Heart left ventricle (tissue), 16 donors: ENCODE measurements at regions of chr1 and their contacts with region 1.

Region 1: GRCh38 chr1:168342572-168343280 is 62.0 kb downstream of the TBX19 start:
- DNase-seq: peak; percentile 89 to 92 (median 90)
- ATAC-seq: peak; percentile 96 to 98 (median 98)
- H3K4me3 ChIP-seq: peak overlapping the region in 9 of 12 donors; percentile 2 to 46 (median 20)
- H3K27ac ChIP-seq: peak overlapping the region in 5 of 12 donors; percentile 2 to 76 (median 39)
- H3K4me1 ChIP-seq: peaks cover 0 to 27% (median 5%) of the 10 kb centered on the region in 12 donors
- H3K27me3 ChIP-seq: no peaks in the 10 kb centered on the region
- CTCF ChIP-seq: peak; percentile 77 to 88 (median 84)
- POLR2A ChIP-seq: no peak

Region 2: DNA sequence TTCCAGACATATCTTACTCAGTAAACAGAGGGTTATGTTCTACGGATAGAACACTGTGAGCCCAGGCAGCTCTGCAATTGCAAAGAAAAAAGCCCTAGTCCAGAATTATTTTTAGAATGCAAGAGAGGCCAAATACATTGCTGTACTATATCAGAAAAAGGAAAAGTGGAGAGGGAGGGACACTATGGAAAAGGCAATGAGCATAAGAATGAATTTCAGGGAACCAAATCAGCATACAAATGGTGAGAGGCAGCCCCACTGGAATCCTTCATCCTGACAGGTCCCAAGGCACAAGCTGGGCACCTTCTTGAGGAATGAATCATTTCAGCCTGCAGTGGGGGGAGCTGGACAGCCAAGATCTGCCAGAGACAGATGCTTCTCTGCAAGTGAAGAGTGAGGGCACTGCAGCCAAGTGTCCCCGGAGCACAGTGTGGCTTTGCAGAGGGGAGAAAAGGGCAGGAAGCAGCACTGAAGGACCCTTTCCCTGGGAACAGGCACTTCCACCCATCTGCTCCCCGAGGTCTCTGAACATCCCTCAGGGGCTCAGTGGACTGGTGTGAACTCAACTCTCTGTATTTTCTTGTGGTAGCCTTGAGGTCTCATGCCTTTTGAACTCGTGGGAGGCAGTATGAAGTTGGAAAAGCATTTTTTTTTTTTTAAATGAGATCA is 85.5 kb after region 1 on chr1:
- intact Hi-C with region 1: loop called in 4 of 10 experiments (anchors 5 to 10 kb)
- DNase-seq: peak in 4 of 5 donors; percentile 28 to 66 (median 46)
- ATAC-seq: peak; percentile 67 to 81 (median 74)
- H3K4me3 ChIP-seq: no peak overlapping the region
- H3K27ac ChIP-seq: peak overlapping the region; percentile 26 to 77 (median 54)
- H3K4me1 ChIP-seq: peaks cover 5 to 47% (median 26%) of the 10 kb centered on the region in 12 donors
- H3K27me3 ChIP-seq: no peaks in the 10 kb centered on the region
- CTCF ChIP-seq: no peak
- POLR2A ChIP-seq: no peak

Region 3: GRCh38 chr1:168439456-168440375 is 97.0 kb after region 1 on chr1:
- intact Hi-C with region 1: loop called in 3 of 10 experiments (anchors 5 to 10 kb)
- DNase-seq: peak; percentile 68 to 82 (median 73)
- ATAC-seq: peak; percentile 91 to 96 (median 92)
- H3K4me3 ChIP-seq: peak overlapping the region in 9 of 12 donors; percentile 12 to 47 (median 30)
- H3K27ac ChIP-seq: no peak overlapping the region
- H3K4me1 ChIP-seq: peaks cover 0 to 12% (median 2%) of the 10 kb centered on the region in 12 donors
- H3K27me3 ChIP-seq: no peaks in the 10 kb centered on the region
- CTCF ChIP-seq: peak; percentile 48 to 81 (median 70)
- POLR2A ChIP-seq: no peak

Region 4: DNA sequence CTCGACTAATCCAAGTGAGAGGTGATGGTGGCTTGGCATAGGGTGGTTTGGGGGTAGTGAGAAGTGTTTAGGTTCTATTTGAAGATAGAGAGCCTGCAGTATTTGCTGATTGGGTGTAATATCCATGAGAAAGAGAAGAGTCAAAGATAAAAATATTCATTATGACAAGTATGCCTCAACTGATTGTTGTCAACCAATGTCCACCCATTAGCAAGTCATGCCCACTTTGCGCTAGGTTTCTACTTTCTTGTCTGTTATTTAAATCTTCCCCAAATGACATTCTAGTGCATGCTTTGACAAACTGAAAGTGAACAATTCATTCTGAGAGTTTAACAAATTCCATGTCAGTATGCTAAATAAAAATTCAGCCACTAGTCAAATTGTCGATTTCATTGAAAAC is 229.9 kb after region 1 on chr1:
- intact Hi-C with region 1: loop called in 9 of 10 experiments (anchors 2 to 10 kb)
- DNase-seq: no peak
- ATAC-seq: no peak
- H3K4me3 ChIP-seq: no peak overlapping the region
- H3K27ac ChIP-seq: no peak overlapping the region
- H3K4me1 ChIP-seq: no peaks in the 10 kb centered on the region
- H3K27me3 ChIP-seq: no peaks in the 10 kb centered on the region
- CTCF ChIP-seq: no peak
- POLR2A ChIP-seq: no peak

Region 5: DNA sequence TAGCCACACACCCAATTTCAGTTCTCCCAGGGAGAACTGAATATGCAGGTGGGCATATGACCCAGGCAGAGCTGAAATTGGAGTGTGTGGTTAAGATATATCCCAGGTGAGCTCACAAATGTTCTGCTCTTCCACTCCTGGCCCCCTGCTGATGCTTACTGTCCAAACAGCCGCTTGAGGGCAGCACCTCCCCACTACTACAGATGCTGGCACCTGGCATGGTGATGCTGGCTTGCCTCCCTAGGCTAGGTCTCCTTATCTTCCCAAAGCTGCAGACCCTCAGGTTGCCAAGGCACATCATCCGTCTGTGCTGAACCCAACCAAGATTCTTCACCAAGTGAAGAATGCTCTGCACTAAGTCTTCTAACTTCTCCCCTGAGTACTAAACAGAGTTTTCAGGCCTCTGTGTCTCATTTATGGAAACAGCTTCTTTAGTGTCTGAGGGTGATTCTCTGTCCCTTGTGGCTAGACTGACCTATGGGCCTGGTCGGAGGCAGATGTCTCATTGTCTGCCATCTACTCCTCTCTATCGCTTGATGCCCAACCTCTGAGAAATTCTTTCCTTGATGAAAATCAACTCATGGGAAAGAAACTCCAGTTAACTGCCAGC is 260.9 kb after region 1 on chr1:
- intact Hi-C with region 1: loop called in 1 of 10 experiments (anchors 10 kb)
- DNase-seq: peak; percentile 69 to 86 (median 79)
- ATAC-seq: peak; percentile 63 to 91 (median 90)
- H3K4me3 ChIP-seq: no peak overlapping the region
- H3K27ac ChIP-seq: no peak overlapping the region
- H3K4me1 ChIP-seq: peaks cover 0 to 17% (median under 1%) of the 10 kb centered on the region in 12 donors
- H3K27me3 ChIP-seq: no peaks in the 10 kb centered on the region
- CTCF ChIP-seq: peak; percentile 68 to 90 (median 82)
- POLR2A ChIP-seq: no peak

Region 6: DNA sequence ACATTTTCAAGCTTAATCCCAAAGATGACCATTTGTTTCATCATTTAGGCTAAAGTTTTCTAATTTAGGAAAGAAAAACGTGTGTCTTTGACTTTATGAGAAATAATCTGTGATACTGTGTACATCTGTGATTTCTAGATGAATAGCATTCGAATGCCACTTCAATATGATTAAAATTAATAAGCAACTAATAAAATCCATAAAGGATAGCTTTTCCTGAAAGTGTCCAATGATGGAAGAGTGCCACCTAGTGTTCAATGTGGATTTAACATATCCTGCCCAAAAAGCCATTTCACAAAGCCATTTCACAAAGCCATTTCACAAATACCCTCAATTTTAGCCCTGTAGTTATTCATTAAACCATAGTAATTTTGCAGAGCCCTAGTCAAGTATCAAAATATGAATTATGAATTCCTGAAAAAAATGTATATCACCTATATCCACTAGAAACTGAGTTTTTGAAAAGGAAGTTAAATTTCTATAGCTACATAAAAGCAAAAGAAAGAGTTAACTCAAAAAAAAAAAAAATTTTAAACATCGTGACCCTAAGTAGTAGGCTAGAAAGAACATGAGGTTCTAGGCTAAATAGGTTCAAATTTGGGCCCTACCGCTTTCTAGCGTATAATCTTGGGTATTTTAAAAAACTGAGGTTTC is 1005.8 kb after region 1 on chr1:
- intact Hi-C with region 1: loop called in 9 of 10 experiments (anchors 1 to 10 kb)
- DNase-seq: peak in 1 of 5 donors; percentile 11
- ATAC-seq: peak in 2 of 4 donors; percentile 34 to 42
- H3K4me3 ChIP-seq: no peak overlapping the region
- H3K27ac ChIP-seq: no peak overlapping the region
- H3K4me1 ChIP-seq: no peaks in the 10 kb centered on the region
- H3K27me3 ChIP-seq: no peaks in the 10 kb centered on the region
- CTCF ChIP-seq: peak; percentile 73 to 88 (median 82)
- POLR2A ChIP-seq: no peak

Region 7: GRCh38 chr1:169367486-169368405 is 1025.0 kb after region 1 on chr1 and contains the starts of genes BLZF1 and NME7:
- intact Hi-C with region 1: loop called in 2 of 10 experiments (anchors 5 to 10 kb)
- DNase-seq: peak; percentile 95 to 97 (median 97)
- ATAC-seq: peak; percentile 99 to 100 (median 100)
- H3K4me3 ChIP-seq: peak within 1 kb of the TSS; percentile 50 to 85 (median 74)
- H3K27ac ChIP-seq: peak within 1 kb of the TSS; percentile 19 to 94 (median 80)
- H3K4me1 ChIP-seq: peaks cover 0 to 51% (median 14%) of the 10 kb centered on the region in 12 donors
- H3K27me3 ChIP-seq: no peaks in the 10 kb centered on the region
- CTCF ChIP-seq: no peak
- POLR2A ChIP-seq: peak in 1 of 2 donors; percentile 31
- total RNA-seq, gene BLZF1: 16.5 to 31.3 (median 23.6) TPM
- total RNA-seq, gene NME7: 6.9 to 14.9 (median 8.4) TPM